Activated B cell treated with CpG ODN at 0.5 μM for 24 hours (primary cell): ENCODE measurements at regions of chr13 and their contacts with region 1.

Region 1: DNA sequence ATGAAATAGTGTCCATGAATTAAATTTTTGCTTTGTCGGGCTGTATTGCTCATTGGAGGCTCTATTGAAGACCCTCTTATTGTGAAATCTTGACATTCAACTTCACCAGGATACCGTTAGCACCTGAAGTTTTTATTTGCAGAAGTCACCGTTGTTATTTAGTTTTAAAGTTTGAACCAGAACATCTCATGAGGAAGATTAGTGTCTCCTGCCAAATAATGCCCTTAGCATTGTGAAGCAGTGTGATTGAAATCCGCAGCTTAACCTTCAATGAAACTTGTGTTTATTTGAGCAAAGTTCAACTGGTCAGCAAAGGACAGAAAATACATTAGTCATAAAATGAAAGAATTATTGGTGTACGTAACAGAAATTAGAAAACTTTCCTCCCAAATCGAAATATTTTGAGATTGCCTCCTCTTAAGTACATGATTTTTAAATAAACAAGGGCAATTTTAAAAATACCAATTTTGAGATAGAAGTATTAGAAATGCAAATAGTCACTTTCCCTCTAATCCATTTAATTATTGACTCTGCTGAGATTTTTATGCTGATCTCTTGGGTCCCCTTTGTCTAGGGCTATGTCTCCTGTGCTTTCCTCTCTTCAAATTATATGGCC is 84.4 kb downstream of the WDFY2 start:
- DNase-seq: no peak
- ATAC-seq: no peak
- H3K4me3 Mint-ChIP-seq: no peak overlapping the region
- H3K27ac Mint-ChIP-seq: no peak overlapping the region
- H3K4me1 Mint-ChIP-seq: peaks cover 67% of the 10 kb centered on the region
- H3K27me3 Mint-ChIP-seq: no peaks in the 10 kb centered on the region
- CTCF ChIP-seq: no peak

Region 2: DNA sequence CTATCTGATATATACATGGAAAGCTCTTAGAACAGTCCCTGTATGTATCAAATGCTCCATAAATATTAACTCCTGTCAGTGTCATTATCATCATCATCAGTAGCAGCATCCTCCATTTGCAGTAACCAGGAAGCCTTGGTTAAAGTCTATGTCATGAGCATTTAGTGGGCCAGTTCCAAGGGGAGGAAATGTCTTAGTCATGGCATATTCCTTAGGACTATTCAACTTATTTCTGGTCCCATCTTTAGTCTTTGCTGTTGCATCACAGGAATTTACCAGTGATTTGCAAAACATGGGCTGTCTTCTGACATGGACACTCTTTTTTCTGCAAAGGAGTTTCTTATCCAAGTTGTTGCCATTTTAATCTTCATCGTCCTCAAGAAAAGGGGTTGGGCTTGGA is 14.0 kb after region 1 on chr13:
- CTCF ChIA-PET with region 1: no interaction called
- POLR2A ChIA-PET with region 1: no interaction called
- intact Hi-C with region 1: loop called (anchors 2 kb)
- DNase-seq: no peak
- ATAC-seq: no peak
- H3K4me3 Mint-ChIP-seq: no peak overlapping the region
- H3K27ac Mint-ChIP-seq: no peak overlapping the region
- H3K4me1 Mint-ChIP-seq: peaks cover 3% of the 10 kb centered on the region
- H3K27me3 Mint-ChIP-seq: no peaks in the 10 kb centered on the region
- CTCF ChIP-seq: no peak